Right lobe of liver (tissue), 6 donors: ENCODE measurements at regions of chr4 and their contacts with region 1.

Region 1: DNA sequence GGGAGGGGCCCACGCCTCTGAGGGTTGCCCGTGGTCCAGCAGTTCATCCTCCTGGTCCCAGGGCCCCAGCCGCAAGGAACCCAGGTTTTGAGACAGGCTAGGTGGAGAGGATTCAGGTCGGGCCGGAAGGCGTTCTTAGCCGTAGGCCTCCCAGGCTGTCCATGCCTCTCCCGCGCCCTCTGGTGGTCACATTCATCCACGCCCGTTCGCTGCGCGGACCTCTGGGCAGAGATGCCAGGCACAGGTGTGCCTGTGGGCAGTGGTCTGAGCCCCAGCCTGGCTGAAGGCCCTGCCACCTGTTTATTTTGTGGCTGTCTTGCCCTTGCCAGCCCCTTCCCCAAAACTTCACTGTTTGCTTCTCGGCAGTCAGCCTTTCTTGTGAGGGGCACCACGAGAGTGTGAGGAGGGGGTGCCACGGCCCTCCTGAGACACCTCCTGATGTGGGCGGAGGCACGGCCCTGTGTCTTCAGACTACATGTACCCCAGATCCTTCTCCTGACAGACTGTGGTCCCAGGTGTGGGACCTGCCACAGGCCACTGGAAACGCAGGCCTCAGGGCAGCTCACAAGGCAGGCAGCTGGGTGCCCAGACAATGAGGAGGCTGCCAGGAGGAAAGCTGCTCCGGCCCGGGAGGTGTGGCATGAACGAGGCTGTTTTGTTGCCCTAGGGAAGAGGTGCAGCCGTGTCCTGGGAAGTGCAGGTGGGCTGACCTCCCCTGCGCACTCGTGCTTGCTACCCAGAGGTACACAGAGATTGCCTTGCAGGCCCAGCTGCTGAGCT is 5.0 kb downstream of the UVSSA start:
- DNase-seq: peak; percentile 87 to 88 (median 88)
- ATAC-seq: peak; percentile 55 to 58 (median 55)
- H3K4me3 ChIP-seq: no peak overlapping the region
- H3K27ac ChIP-seq: no peak overlapping the region
- H3K4me1 ChIP-seq: peaks cover 0 to 11% (median 4%) of the 10 kb centered on the region in 4 donors
- H3K27me3 ChIP-seq: no peaks in the 10 kb centered on the region
- CTCF ChIP-seq: peak; percentile 82 to 99 (median 96)
- POLR2A ChIP-seq: no peak

Region 2: DNA sequence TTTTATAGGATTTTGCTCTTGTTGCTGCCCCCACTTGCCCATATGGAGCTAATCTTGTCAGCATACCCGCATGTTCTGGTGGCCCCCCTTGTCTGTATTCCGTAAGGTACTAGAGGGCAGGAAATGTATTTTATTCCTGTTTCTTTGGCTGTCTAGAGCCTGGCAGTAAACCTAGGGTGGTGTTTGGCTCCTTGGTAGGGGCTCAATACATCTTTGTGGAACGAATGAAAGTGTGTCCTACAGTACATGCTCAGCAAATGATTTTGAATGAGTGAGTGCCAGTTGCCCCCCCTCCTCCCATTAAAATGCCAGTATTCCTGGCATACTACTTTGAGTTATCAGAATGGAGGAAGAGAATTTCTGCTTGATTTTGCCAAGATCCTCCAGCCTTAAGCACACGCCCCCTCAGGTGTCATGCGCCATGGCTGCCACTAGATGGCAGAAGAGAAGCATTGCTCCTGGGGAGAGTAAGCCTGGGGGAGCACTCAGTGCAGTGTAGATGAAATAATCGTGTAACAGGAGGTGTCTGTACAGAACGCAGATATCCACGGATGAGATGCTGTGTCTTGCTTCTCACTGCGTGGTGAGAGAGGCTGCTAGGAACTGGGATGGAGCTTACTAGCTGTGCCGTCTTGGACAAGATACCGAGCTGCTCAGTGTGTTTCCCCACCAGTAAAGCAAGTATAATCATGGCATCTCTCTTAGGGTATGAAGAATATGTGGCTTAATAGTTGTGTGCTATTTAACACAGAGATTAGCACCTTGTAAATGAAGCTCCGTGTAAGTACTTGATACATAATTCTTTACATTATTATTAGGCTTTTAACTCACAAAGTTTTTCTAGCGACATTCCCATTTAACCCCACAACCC is 221.5 kb before region 1 on chr4:
- intact Hi-C with region 1: loop called in 1 of 2 experiments (anchors 10 kb)
- DNase-seq: peak; percentile 62 to 74 (median 70)
- ATAC-seq: peak; percentile 98 to 100 (median 100)
- H3K4me3 ChIP-seq: no peak overlapping the region
- H3K27ac ChIP-seq: no peak overlapping the region
- H3K4me1 ChIP-seq: no peaks in the 10 kb centered on the region
- H3K27me3 ChIP-seq: no peaks in the 10 kb centered on the region
- CTCF ChIP-seq: peak; percentile 98 to 100 (median 99)
- POLR2A ChIP-seq: no peak

Region 3: DNA sequence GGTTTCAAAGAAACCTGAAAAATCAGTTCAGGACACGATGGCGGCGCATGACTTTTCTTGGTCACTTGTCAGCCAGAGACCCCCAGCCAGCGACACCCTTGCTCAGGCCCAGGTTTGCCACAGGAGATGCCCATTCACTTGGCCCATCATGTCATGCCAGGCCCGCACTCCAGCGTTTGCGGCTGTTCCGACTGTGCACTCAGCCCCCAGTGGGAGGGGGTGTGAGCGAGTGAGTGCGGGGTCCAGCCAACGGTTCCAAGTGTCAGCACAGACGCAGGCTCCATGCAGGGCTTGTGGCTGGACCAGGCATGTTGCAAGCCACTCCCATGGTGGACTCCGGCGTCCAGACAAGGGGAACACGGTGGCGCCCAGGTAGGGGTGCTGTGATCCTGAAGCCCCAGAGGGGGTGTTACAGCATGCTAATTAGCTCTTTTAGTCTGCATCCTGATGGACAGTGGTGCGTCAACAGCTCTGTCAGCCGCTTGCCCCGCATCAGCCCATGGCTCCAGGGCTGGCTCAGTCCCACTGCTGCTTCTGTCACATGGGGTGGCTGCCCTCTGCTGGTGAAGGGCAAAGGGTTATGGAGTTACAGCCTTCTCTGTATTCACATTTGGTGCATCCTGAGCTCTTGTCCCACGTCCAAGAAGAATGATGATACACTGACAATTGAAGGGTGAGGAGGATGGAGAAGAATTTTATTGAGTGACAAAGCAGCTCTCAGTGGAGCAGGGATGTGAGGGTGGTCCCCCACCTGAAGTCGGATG is 66.1 kb before region 1 on chr4:
- intact Hi-C with region 1: no loop called
- DNase-seq: no peak
- ATAC-seq: no peak
- H3K4me3 ChIP-seq: no peak overlapping the region
- H3K27ac ChIP-seq: no peak overlapping the region
- H3K4me1 ChIP-seq: peaks cover 0 to 8% (median under 1%) of the 10 kb centered on the region in 4 donors
- H3K27me3 ChIP-seq: no peaks in the 10 kb centered on the region
- CTCF ChIP-seq: peak in 1 of 4 donors; percentile 8
- POLR2A ChIP-seq: no peak

Region 4: GRCh38 chr4:1512738-1513660 is 161.0 kb after region 1 on chr4:
- intact Hi-C with region 1: loop called in 1 of 2 experiments (anchors 10 kb)
- DNase-seq: peak in 2 of 3 donors; percentile 55 to 61
- ATAC-seq: peak; percentile 70 to 82 (median 79)
- H3K4me3 ChIP-seq: peak overlapping the region in 2 of 3 donors; percentile 26 to 46
- H3K27ac ChIP-seq: no peak overlapping the region
- H3K4me1 ChIP-seq: no peaks in the 10 kb centered on the region
- H3K27me3 ChIP-seq: peaks cover 0 to 3% of the 10 kb centered on the region in 2 donors
- CTCF ChIP-seq: peak; percentile 53 to 84 (median 56)
- POLR2A ChIP-seq: no peak

Region 5: GRCh38 chr4:1596393-1596792 is 244.3 kb after region 1 on chr4:
- intact Hi-C with region 1: no loop called
- DNase-seq: peak in 2 of 3 donors; percentile 1 to 46
- ATAC-seq: no peak
- H3K4me3 ChIP-seq: no peak overlapping the region
- H3K27ac ChIP-seq: no peak overlapping the region
- H3K4me1 ChIP-seq: no peaks in the 10 kb centered on the region
- H3K27me3 ChIP-seq: no peaks in the 10 kb centered on the region
- CTCF ChIP-seq: no peak
- POLR2A ChIP-seq: no peak

Region 6: GRCh38 chr4:1628892-1629698 is 277.1 kb after region 1 on chr4:
- intact Hi-C with region 1: loop called in 1 of 2 experiments (anchors 5 kb)
- DNase-seq: peak; percentile 61 to 72 (median 66)
- ATAC-seq: peak; percentile 69 to 89 (median 85)
- H3K4me3 ChIP-seq: no peak overlapping the region
- H3K27ac ChIP-seq: no peak overlapping the region
- H3K4me1 ChIP-seq: no peaks in the 10 kb centered on the region
- H3K27me3 ChIP-seq: no peaks in the 10 kb centered on the region
- CTCF ChIP-seq: peak; percentile 88 to 98 (median 95)
- POLR2A ChIP-seq: no peak